Ovary (tissue), 10 donors: ENCODE measurements at regions of chr3 and their contacts with region 1.

Region 1: GRCh38 chr3:45224824-45225464 is 1.1 kb downstream of the TMEM158 start:
- DNase-seq: peak; percentile 37 to 76 (median 53)
- H3K4me3 ChIP-seq: peak overlapping the region; percentile 54
- H3K27ac ChIP-seq: no peak overlapping the region
- H3K4me1 ChIP-seq: no peaks in the 10 kb centered on the region
- H3K27me3 ChIP-seq: no peaks in the 10 kb centered on the region
- CTCF ChIP-seq: no peak
- EP300 ChIP-seq: no peak
- POLR2A ChIP-seq: no peak

Region 2: DNA sequence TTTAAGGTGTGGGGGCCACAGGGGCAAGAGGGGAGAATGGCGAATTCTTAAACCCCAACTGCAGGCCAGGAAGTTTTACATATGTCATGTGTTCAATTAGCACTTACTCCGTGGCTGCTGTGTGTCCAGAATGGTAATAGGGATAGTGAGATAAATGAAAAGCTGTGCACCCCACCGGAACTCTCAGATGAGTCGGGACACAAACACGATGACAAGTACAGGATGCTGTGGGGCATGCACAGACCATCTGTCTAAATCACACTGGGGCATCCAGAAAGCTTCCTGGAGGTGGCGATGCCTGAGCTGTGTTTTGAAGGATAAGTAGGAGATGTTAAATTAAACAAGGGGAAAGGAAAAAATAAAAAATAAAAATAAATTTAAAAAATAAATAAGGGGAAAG is 19.4 kb after region 1 on chr3:
- intact Hi-C with region 1: no loop called
- DNase-seq: no peak
- H3K4me3 ChIP-seq: no peak overlapping the region
- H3K27ac ChIP-seq: no peak overlapping the region
- H3K4me1 ChIP-seq: no peaks in the 10 kb centered on the region
- H3K27me3 ChIP-seq: no peaks in the 10 kb centered on the region
- CTCF ChIP-seq: no peak
- EP300 ChIP-seq: no peak
- POLR2A ChIP-seq: no peak

Region 3: GRCh38 chr3:45387636-45388348 is 162.8 kb after region 1 on chr3:
- intact Hi-C with region 1: no loop called
- DNase-seq: peak in 1 of 5 donors; percentile 41
- H3K4me3 ChIP-seq: peak overlapping the region; percentile 85
- H3K27ac ChIP-seq: no peak overlapping the region
- H3K4me1 ChIP-seq: peaks cover 4% of the 10 kb centered on the region
- H3K27me3 ChIP-seq: no peaks in the 10 kb centered on the region
- CTCF ChIP-seq: no peak
- EP300 ChIP-seq: no peak
- POLR2A ChIP-seq: no peak

Region 4: DNA sequence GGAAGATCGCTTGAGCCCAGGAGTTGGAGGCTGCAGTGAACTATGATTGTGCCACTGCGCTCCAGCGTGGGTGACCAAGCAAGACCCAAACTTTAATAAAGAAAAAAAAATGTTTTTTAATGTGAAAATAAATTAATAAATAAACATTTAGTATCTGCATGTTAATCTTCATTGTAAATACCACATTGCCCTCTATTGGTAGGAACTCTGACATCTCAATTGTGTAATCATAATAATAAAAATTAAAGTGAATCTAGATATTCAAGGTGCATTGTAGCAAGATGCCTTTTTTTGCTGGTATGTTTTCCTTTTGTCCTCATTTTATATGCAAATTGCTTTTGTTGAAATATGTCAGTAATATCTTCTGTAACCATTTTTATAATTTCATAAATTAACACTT is 274.6 kb after region 1 on chr3:
- intact Hi-C with region 1: loop called in 3 of 4 experiments (anchors 10 kb)
- DNase-seq: no peak
- H3K4me3 ChIP-seq: no peak overlapping the region
- H3K27ac ChIP-seq: no peak overlapping the region
- H3K4me1 ChIP-seq: no peaks in the 10 kb centered on the region
- H3K27me3 ChIP-seq: no peaks in the 10 kb centered on the region
- CTCF ChIP-seq: peak in 2 of 3 donors; percentile 13 to 30
- EP300 ChIP-seq: no peak
- POLR2A ChIP-seq: no peak